H1 (cell line): ENCODE measurements at regions of chr5 and their contacts with region 1.

Region 1: DNA sequence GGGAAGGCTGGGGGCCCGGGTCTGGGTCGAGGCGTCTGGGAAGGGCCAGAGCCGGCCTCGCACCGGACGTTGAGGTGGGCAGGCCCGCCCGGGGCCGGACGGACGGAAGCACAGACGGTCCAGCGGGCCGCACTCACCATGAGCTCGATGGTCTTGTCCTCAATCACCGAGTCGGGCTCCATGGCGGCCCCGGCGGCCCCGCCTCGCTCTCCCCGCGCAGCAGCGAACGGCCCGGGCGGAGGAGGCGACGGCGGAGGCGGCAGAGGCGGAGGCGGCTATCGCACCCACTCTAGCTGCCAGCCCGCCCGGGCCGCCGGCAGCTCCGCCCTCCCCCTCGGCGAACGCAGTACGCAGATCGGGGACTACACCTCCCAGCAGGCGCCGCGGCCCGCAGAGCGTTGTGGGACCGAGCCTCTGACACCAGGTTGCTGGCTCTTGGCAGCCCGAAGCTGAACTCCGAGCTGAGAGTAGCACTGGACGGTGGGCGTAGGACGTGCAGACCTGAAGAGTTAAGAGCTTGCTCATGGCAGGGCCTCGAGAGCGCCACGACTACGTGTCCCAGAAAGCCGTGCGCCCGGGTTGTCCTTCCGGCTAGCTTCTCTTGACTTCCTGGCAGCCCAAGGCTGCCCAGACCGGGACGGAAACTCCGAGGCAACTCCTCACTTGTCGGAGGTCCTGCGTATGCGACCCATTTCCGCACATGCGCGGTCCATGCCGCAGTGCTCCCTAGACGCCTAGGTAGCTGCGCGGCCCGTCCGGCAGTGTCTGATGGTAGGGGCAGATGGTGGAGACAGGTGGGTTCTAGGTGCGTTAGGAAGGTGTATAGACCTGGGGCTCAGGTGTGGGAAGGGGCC is at the start of gene FBXW11:
- DNase-seq: peak; percentile 89 to 91
- H3K4me3 ChIP-seq: peak within 1 kb of the TSS; percentile 82 to 99 (median 96)
- H3K27ac ChIP-seq: peak within 1 kb of the TSS; percentile 98
- H3K4me1 ChIP-seq: peaks cover 13 to 34% (median 19%) of the 10 kb centered on the region in 4 experiments
- H3K27me3 ChIP-seq: no peaks in the 10 kb centered on the region
- CTCF ChIP-seq: no peak; a peak in 1 of 4 replicates
- EP300 ChIP-seq: no peak
- POLR2A ChIP-seq: peak; percentile 63 to 72
- RAD21 ChIP-seq: no peak
- total RNA-seq, gene FBXW11: 75.6 and 77.2 TPM in 2 replicates

Region 2: DNA sequence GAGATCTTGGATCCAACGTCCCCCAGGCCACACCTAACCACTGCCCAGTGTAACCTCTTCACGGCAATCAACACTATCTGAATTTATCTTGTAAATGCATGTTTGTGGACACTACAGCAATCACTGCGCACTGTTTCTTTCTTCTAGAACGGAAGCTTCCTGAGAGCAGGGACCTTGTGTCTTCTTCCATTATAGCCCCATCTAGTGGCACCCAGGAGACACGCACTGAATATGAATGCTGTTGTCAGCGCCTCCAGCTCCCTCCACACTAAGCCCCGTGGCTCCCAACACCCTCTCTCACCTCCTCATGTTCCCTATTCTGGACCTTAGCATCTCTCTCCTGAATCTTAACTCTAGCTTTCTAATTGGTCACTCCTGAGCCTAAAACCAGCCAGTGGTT is 148.2 kb before region 1 on chr5:
- CTCF ChIA-PET with region 1: interaction called, 11 read pairs
- POLR2A ChIA-PET with region 1: no interaction called
- DNase-seq: no peak
- H3K4me3 ChIP-seq: no peak overlapping the region
- H3K27ac ChIP-seq: no peak overlapping the region
- H3K4me1 ChIP-seq: peaks cover 0 to 5% (median 2%) of the 10 kb centered on the region in 4 experiments; a peak in 5 of 7 replicates
- H3K27me3 ChIP-seq: no peaks in the 10 kb centered on the region
- CTCF ChIP-seq: peak; percentile 64 to 89 (median 73)
- EP300 ChIP-seq: no peak
- POLR2A ChIP-seq: peak in 1 of 2 experiments; percentile 10; a peak in 1 of 3 replicates
- RAD21 ChIP-seq: peak; percentile 69 to 70

Region 3: DNA sequence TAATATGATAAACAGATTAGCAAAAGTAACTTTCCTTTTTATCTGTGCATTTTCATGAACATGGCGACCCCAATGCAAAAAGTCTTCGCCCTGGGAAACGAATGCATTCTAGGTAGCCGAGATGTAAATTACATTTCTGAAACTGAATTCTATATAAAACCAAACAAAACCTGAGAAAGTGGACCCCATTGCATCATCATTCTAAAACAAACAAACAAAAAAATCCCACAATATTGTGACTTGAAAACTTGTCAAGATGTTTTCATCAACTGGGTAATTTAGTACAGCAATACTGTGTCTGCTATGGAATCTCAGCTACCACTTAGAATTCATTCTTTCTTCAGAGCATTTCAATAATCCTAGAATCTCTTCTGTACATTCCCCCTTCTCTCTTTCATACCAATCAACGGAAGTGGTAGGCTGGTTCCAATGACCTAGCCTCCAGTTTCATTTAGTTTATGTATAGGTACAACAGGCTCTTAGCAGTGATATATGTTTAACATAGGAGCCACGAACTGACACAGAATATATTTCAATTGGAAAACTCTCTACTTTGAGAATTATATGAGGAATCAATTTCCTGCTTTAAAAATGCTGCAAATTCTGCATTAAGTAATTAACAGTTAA is 85.7 kb before region 1 on chr5:
- CTCF ChIA-PET with region 1: interaction called, 7 read pairs
- POLR2A ChIA-PET with region 1: interaction called, 24 read pairs
- DNase-seq: no peak
- H3K4me3 ChIP-seq: no peak overlapping the region
- H3K27ac ChIP-seq: no peak overlapping the region
- H3K4me1 ChIP-seq: peaks cover 0 to 9% (median 7%) of the 10 kb centered on the region in 4 experiments; a peak in 6 of 7 replicates
- H3K27me3 ChIP-seq: no peaks in the 10 kb centered on the region
- CTCF ChIP-seq: no peak
- EP300 ChIP-seq: no peak
- POLR2A ChIP-seq: no peak
- RAD21 ChIP-seq: no peak

Region 4: GRCh38 chr5:171978519-171978918 is 28.0 kb before region 1 on chr5:
- CTCF ChIA-PET with region 1: interaction called, 5 read pairs
- POLR2A ChIA-PET with region 1: interaction called, 66 read pairs
- DNase-seq: no peak
- H3K4me3 ChIP-seq: peak overlapping the region in 3 of 4 experiments; percentile 7 to 45 (median 12); a peak in 4 of 8 replicates
- H3K27ac ChIP-seq: peak overlapping the region; percentile 49; the same call in 1 of the 2 replicates
- H3K4me1 ChIP-seq: peaks cover 14 to 44% (median 43%) of the 10 kb centered on the region in 4 experiments
- H3K27me3 ChIP-seq: no peaks in the 10 kb centered on the region
- CTCF ChIP-seq: no peak
- EP300 ChIP-seq: no peak
- POLR2A ChIP-seq: peak in 1 of 2 experiments; percentile 52; a peak in 1 of 3 replicates
- RAD21 ChIP-seq: no peak

Region 5: DNA sequence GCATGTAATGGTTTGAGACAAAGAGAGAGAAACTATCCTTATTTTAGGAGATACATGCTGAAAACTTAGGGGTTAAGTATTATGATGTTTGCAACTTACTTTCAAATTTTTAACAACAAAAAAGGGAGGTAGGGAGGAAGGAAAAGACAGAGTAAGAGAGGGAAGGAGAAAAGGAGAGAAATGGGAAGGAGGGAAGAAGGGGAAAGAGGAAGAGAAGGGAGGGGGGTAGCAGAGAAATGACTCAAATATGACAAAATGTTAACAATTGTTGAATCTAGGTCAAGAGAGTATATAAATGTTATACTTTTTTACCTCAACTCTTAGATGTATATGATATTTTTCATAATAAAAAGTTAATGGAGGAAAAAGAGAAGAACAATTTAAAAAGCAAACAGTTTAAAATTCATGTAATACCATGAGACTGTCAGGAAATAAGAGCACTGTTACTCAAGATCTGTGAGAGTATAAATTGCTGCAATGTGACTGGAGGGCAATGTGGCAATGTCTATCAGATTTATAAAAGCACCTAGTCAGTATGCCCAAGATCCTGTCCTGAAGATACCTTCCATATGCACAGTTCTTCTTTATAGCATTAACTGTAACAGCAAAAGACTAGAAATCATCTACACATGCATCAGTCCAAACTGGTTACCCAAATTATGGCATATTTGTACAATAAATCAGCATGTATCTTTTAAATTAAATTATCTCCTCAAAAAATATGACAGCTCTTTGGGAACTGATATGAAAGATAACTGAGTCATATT is 16.4 kb before region 1 on chr5:
- CTCF ChIA-PET with region 1: interaction called, 22 read pairs
- POLR2A ChIA-PET with region 1: interaction called, 58 read pairs
- DNase-seq: no peak
- H3K4me3 ChIP-seq: no peak overlapping the region
- H3K27ac ChIP-seq: no peak overlapping the region
- H3K4me1 ChIP-seq: peaks cover 2 to 15% (median 8%) of the 10 kb centered on the region in 4 experiments; a peak in 5 of 7 replicates
- H3K27me3 ChIP-seq: no peaks in the 10 kb centered on the region
- CTCF ChIP-seq: no peak
- EP300 ChIP-seq: no peak
- POLR2A ChIP-seq: no peak
- RAD21 ChIP-seq: no peak

Region 6: DNA sequence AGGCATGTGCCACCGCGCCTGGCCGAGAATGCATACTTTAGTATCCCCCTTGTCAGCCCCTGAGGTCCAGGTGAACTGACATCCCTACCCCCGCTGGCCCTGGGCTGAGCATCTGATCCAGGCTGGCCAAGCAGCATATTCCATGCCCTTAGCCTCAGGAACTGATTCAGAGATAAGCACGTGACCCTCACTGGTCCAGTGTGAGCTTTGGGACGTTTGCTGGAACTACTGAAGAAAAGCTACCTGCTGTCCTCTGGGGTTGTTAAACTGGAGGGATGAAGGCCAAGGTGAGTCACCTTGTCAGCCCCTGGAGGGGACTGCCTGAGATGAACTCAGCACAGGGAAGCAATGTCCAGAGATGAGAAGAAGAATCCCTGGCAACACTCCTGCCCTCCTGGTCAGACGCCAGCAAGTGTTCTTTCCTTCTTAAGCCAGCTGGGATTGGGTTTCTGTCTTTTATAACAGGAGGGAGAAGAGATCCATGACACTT is 59.0 kb after region 1 on chr5:
- CTCF ChIA-PET with region 1: no interaction called
- POLR2A ChIA-PET with region 1: no interaction called
- DNase-seq: no peak
- H3K4me3 ChIP-seq: no peak overlapping the region
- H3K27ac ChIP-seq: no peak overlapping the region
- H3K4me1 ChIP-seq: peaks cover 0 to 5% (median 0%) of the 10 kb centered on the region in 4 experiments; a peak in 4 of 7 replicates
- H3K27me3 ChIP-seq: no peaks in the 10 kb centered on the region
- CTCF ChIP-seq: no peak
- EP300 ChIP-seq: no peak
- POLR2A ChIP-seq: no peak
- RAD21 ChIP-seq: no peak